PC-3 (cell line): ENCODE measurements at regions of chr2 and their contacts with region 1.

Region 1: DNA sequence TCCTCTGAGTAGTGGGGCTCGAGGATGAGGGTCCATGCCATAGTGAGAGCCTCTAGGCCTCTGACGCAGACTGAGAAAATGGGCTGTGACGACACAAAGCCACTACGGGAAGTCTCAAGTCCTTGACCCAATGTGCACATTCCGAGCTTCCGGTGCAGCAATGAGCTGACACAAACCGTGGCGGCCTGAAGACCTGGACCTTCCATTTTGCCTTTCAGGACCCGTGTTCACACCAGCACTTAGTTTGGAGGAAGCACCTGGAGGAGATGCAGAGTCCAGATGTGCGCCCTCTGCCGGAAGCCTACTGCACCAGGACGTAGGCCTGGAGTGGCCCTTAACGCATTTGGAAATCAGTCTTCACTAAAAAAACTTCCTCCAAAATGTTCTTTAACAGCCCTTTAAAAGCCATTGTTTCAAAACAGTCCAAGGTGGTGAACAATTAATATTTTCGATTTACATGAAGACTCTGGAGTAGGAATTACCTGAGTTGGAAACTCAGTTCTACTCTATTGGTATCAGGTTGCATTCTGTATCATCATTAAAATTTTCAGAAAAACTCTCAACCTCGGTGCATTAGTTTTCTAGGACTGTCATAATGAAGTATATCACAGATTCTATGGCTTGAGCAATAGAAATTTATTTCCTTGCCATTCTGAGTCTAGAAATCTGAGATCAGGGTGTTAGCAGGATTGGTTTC is 33.9 kb downstream of the BMP10 start:
- DNase-seq: peak; percentile 65
- ATAC-seq: peak; percentile 86
- H3K4me3 ChIP-seq: no peak overlapping the region
- H3K27ac ChIP-seq: no peak overlapping the region
- H3K4me1 ChIP-seq: peaks cover 6% of the 10 kb centered on the region
- H3K27me3 ChIP-seq: no peaks in the 10 kb centered on the region
- CTCF ChIP-seq: peak; percentile 80

Region 2: GRCh38 chr2:68565858-68566257 is 271.5 kb before region 1 on chr2:
- CTCF ChIA-PET with region 1: no interaction called
- POLR2A ChIA-PET with region 1: no interaction called
- intact Hi-C with region 1: no loop called
- DNase-seq: peak; percentile 87
- ATAC-seq: peak; percentile 94
- H3K4me3 ChIP-seq: no peak overlapping the region
- H3K27ac ChIP-seq: peak overlapping the region; percentile 56
- H3K4me1 ChIP-seq: peaks cover 45% of the 10 kb centered on the region
- H3K27me3 ChIP-seq: no peaks in the 10 kb centered on the region
- CTCF ChIP-seq: no peak

Region 3: GRCh38 chr2:68751397-68752339 is 85.6 kb before region 1 on chr2:
- CTCF ChIA-PET with region 1: interaction called, 5 read pairs
- POLR2A ChIA-PET with region 1: no interaction called
- intact Hi-C with region 1: loop called (anchors 5 kb)
- DNase-seq: peak; percentile 95
- ATAC-seq: peak; percentile 99
- H3K4me3 ChIP-seq: no peak overlapping the region
- H3K27ac ChIP-seq: no peak overlapping the region
- H3K4me1 ChIP-seq: no peaks in the 10 kb centered on the region
- H3K27me3 ChIP-seq: no peaks in the 10 kb centered on the region
- CTCF ChIP-seq: peak; percentile 94

Region 4: DNA sequence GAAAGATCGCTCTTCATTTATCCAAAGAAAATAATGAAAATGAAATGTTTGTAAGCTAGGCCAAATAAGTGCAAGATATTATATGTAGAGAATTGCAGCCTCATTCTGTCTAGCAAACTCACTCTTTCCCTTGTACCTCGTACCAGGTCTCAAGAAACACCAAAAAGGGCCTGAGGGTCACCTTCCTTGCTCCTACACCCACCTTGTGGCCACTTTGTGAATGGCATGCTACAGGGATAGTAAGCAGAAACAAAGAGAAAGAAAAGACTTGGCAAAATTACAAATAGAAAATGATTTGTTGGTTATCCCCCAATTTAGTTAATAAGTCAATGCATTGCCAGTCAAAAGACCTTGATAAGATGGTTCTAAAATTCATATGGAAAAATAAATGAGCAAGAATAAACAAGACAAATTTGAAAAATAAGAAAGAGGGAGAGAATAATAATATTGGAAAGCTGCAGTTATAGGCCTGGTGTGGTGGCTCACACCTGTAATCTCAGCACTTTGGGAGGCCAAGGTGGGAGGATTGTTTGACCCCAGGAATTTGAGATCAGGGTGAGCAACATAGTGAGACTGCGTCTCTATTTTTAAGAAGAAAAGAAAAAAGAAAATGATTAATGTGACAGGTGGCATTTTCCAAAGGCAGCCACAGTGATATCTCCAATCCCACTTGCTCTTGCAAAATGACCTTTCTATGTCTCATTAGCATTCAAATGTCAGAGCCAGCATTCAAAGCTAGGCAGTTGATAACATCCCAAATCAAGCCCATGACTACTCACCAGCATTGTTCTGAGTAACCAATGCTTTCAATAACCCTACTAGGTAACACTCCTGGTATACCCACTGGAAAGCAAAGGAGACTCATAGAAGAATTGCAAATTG is 72.7 kb after region 1 on chr2:
- CTCF ChIA-PET with region 1: interaction called, 4 read pairs
- POLR2A ChIA-PET with region 1: no interaction called
- intact Hi-C with region 1: loop called (anchors 5 kb)
- DNase-seq: peak; percentile 88
- ATAC-seq: no peak
- H3K4me3 ChIP-seq: no peak overlapping the region
- H3K27ac ChIP-seq: no peak overlapping the region
- H3K4me1 ChIP-seq: peaks cover 29% of the 10 kb centered on the region
- H3K27me3 ChIP-seq: no peaks in the 10 kb centered on the region
- CTCF ChIP-seq: peak; percentile 89

Region 5: DNA sequence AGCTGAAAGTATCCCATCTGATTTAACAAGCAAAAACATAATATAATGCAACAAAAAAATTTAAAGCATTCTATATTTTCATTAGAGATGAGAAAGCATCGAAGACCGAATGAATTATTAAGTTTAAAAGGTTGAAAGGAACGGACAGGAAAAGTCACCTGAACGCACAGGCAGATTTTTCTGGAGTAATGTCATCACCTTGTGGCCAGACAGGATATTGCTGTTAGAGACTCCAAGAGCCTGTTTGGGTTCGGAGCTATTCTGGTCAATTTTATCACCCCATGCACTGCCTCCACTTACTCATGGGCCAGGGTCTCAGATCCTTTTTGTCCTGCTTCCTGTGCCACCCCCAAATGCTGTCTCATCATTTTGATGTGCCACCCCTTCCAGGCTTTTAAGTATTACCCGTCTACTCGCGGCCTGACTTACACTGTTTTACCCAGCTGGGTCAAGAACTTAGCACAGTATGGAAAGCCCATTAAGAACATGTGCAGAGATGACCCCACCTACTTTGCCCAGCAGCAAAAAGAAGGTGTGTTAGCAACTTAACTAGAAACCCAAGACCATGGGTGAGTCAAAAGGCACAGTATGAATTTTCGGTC is 88.1 kb after region 1 on chr2:
- CTCF ChIA-PET with region 1: no interaction called
- POLR2A ChIA-PET with region 1: no interaction called
- intact Hi-C with region 1: loop called (anchors 5 kb)
- DNase-seq: peak; percentile 81
- ATAC-seq: peak; percentile 84
- H3K4me3 ChIP-seq: no peak overlapping the region
- H3K27ac ChIP-seq: no peak overlapping the region
- H3K4me1 ChIP-seq: no peaks in the 10 kb centered on the region; the same call in 1 of the 2 replicates
- H3K27me3 ChIP-seq: no peaks in the 10 kb centered on the region
- CTCF ChIP-seq: peak; percentile 93

Region 6: DNA sequence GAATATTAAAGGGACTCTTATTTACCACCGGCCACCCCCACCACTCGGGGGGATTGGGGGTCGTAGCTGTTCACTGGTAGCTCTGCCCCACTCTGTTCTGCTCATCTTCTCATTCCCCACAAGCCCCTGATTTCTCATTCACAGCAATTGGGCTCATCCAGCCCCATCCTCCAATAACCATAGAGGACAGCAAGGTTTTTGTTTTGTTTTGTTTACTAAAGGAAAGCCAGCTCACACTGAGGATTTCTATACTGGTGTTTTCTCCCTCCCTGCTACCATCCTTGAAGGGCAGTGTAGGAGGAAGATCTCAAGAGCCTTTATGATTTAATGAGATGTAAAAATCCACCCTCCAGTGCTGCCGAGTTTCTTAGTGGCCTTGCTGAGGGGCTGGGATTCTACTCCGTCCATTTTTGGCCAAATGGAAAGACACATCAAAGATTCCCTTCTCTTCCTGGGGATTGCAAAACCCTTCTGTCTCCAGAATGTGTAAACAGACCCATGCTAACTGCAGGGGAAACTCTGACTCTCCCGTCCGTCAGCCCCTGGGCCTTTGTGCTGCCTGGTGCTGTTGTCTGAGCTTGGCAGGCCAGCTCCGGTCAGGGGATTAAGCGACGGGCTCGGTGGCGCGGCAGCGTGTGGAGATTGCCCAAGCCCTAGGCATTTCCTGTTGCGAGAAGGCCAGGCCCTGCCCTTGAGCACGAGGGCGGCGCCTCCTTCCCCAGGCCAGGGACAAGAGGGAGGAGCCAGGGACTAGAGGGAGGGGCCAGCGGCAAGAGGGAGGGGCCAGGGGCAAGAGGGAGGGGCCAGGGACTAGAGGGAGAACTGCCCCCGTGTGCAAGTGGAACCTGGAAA is 340.7 kb after region 1 on chr2:
- CTCF ChIA-PET with region 1: no interaction called
- POLR2A ChIA-PET with region 1: no interaction called
- intact Hi-C with region 1: loop called (anchors 5 kb)
- DNase-seq: no peak
- ATAC-seq: no peak
- H3K4me3 ChIP-seq: no peak overlapping the region
- H3K27ac ChIP-seq: no peak overlapping the region
- H3K4me1 ChIP-seq: no peaks in the 10 kb centered on the region
- H3K27me3 ChIP-seq: no peaks in the 10 kb centered on the region
- CTCF ChIP-seq: no peak

Region 7: DNA sequence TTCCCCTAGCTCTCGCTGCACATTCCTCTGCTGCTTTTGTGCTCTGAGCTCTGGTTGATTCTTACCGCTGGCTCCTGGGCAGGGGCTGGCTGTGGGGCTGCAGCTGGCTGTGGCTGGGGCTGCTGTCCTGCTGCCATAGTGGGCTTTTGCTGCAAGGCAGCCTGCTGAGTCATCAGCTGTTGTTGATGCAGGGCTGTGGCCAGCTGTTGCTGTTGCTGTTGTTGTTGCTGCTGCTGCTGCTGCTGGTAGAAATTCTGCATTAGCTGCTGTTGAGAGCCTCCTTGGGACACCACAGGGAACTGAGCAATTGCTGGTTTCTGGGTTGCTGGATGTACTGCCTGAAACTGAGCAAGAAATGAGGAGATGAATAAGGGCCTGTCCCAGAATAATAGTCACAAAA is 677.1 kb after region 1 on chr2:
- CTCF ChIA-PET with region 1: no interaction called
- POLR2A ChIA-PET with region 1: no interaction called
- intact Hi-C with region 1: no loop called
- DNase-seq: no peak
- ATAC-seq: no peak; the same call in none of the 2 replicates
- H3K4me3 ChIP-seq: no peak overlapping the region
- H3K27ac ChIP-seq: no peak overlapping the region
- H3K4me1 ChIP-seq: peaks cover 9% of the 10 kb centered on the region
- H3K27me3 ChIP-seq: no peaks in the 10 kb centered on the region
- CTCF ChIP-seq: no peak